ENCODE measurements at regions of chr7 and their contacts with region 1.

Region 1: DNA sequence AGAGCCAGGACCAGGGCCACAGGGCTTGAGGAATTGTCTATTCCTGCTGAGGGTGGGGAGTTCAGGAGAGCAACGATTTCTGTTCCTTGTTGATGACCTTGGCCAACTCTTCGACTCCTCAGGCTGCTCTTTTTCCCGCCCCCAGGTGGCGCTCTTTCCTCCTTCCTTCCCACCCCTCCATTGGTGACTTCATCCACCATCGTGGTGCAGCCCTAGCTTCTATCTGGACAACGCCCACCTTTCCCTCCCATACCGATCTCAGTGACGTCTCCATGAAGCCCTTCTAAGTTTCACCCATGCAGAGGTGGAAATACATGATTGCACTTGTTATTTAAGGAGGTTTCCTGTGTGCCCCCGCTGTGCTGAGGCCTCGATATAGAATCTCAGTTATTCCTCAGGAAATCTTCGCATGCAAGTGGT is 22.1 kb upstream of the CARD11 start:
- DNase-seq: peak; percentile 85
- ATAC-seq: peak; percentile 24
- H3K4me3 Mint-ChIP-seq: peak overlapping the region; percentile 44
- H3K27ac Mint-ChIP-seq: peak overlapping the region; percentile 91
- H3K4me1 Mint-ChIP-seq: peaks cover 94% of the 10 kb centered on the region
- H3K27me3 Mint-ChIP-seq: no peaks in the 10 kb centered on the region

Region 2: GRCh38 chr7:2894118-2894940 is 171.4 kb before region 1 on chr7:
- CTCF ChIA-PET with region 1: no interaction called
- POLR2A ChIA-PET with region 1: no interaction called
- intact Hi-C with region 1: loop called (anchors 1 to 5 kb)
- DNase-seq: peak; percentile 83
- ATAC-seq: peak; percentile 89
- H3K4me3 Mint-ChIP-seq: peak overlapping the region; percentile 69
- H3K27ac Mint-ChIP-seq: peak overlapping the region; percentile 98
- H3K4me1 Mint-ChIP-seq: peaks cover 29% of the 10 kb centered on the region
- H3K27me3 Mint-ChIP-seq: no peaks in the 10 kb centered on the region

Region 3: DNA sequence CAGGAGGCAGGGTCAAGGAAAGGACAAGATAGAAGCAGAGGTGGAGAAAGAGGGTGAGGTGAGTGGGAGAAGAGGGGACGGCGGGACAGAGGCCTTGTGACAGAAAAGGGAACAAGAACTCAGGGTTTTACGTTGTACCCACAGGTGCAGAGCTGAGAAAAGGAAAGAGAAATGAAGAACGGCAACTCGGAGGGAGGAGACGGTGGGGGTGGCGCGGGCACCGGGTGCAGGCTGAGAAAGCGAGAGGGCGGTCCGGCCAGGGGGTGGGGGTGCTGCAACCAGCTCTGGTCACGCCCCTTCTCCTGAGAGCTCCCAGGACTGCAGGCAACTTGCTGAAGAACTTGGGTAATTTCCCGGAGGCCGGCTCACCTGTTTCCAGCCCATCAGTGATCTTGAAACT is 87.3 kb before region 1 on chr7:
- CTCF ChIA-PET with region 1: no interaction called
- POLR2A ChIA-PET with region 1: interaction called, 3 read pairs
- intact Hi-C with region 1: loop called in 1 of 2 experiments (anchors 1 kb)
- DNase-seq: peak; percentile 98
- ATAC-seq: peak; percentile 91
- H3K4me3 Mint-ChIP-seq: peak overlapping the region; percentile 74
- H3K27ac Mint-ChIP-seq: peak overlapping the region; percentile 94
- H3K4me1 Mint-ChIP-seq: peaks cover 75% of the 10 kb centered on the region
- H3K27me3 Mint-ChIP-seq: no peaks in the 10 kb centered on the region

Region 4: GRCh38 chr7:3042861-3043489 is 22.8 kb before region 1 on chr7:
- CTCF ChIA-PET with region 1: interaction called, 10 read pairs
- POLR2A ChIA-PET with region 1: interaction called, 4 read pairs
- intact Hi-C with region 1: loop called (anchors 1 kb)
- DNase-seq: peak; percentile 86
- ATAC-seq: peak; percentile 80
- H3K4me3 Mint-ChIP-seq: peak overlapping the region; percentile 97
- H3K27ac Mint-ChIP-seq: peak overlapping the region; percentile 97
- H3K4me1 Mint-ChIP-seq: peaks cover 55% of the 10 kb centered on the region
- H3K27me3 Mint-ChIP-seq: no peaks in the 10 kb centered on the region

Region 5: DNA sequence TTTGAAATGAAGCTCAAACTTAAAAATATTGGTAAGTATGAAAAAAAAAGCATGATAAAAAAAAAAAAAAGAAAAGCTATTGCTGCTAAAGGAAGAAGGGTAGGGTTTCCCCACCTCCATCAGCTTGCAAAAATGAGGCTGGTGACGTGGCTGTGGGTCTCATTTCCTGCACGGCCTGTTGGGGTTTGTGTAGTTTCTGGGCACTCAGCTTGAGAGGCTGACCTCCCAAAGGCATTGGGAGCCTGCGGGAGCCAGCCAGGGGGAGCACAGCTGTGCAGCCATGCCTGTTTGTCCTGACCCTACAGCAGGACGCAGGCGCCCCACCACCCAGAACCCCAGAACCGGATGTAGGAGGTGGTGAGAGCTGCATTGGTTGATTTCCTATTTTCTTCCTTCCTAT is 26.7 kb after region 1 on chr7:
- CTCF ChIA-PET with region 1: interaction called, 87 read pairs
- POLR2A ChIA-PET with region 1: interaction called, 5 read pairs
- intact Hi-C with region 1: loop called (anchors 1 to 2 kb)
- DNase-seq: peak; percentile 88
- ATAC-seq: peak; percentile 86
- H3K4me3 Mint-ChIP-seq: peak overlapping the region; percentile 32
- H3K27ac Mint-ChIP-seq: peak overlapping the region; percentile 89
- H3K4me1 Mint-ChIP-seq: peaks cover 67% of the 10 kb centered on the region
- H3K27me3 Mint-ChIP-seq: no peaks in the 10 kb centered on the region

Region 6: DNA sequence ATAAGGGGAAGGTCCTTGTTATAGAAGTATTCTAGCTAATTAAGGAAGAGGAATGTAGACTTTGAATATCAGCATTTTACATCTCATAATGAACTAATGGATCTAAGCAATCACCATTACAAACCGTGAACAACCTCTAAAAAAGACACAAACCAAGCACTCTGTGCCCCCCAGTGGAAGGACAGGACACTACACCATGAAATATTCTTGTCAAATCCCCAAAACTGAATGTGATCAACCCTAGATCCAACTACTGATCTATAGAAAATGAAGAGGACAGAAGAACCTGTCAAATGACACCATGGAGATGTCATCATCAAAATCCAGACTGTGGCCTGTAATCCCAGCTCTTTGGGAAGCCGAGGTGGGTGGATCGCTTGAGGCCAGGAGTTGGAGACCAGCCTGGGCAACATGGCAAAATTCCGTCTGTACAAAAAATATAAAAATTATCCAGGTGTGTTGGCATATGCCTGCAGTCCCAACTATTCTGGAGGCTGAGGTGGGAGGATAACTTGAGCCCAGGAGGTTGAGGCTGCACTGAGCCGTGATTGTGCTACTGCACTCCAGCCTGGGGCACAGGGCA is 89.3 kb after region 1 on chr7:
- CTCF ChIA-PET with region 1: interaction called, 17 read pairs
- POLR2A ChIA-PET with region 1: no interaction called
- intact Hi-C with region 1: loop called (anchors 1 kb)
- DNase-seq: peak; percentile 80
- ATAC-seq: peak; percentile 72
- H3K4me3 Mint-ChIP-seq: no peak overlapping the region
- H3K27ac Mint-ChIP-seq: no peak overlapping the region
- H3K4me1 Mint-ChIP-seq: peaks cover 26% of the 10 kb centered on the region
- H3K27me3 Mint-ChIP-seq: peaks cover 2% of the 10 kb centered on the region